ENCODE measurements at regions of chr1 and their contacts with region 1.

Region 1: GRCh38 chr1:162612606-162613400 is 19.5 kb upstream of the DDR2 start:
- DNase-seq: peak; percentile 63
- H3K4me3 Mint-ChIP-seq: no peak overlapping the region
- H3K27ac Mint-ChIP-seq: peak overlapping the region; percentile 66
- H3K4me1 Mint-ChIP-seq: peaks cover 5% of the 10 kb centered on the region
- H3K27me3 Mint-ChIP-seq: no peaks in the 10 kb centered on the region
- CTCF ChIP-seq: no peak

Region 2: GRCh38 chr1:162003826-162004208 is 609.0 kb before region 1 on chr1:
- CTCF ChIA-PET with region 1: no interaction called
- POLR2A ChIA-PET with region 1: no interaction called
- intact Hi-C with region 1: no loop called
- DNase-seq: peak; percentile 91
- H3K4me3 Mint-ChIP-seq: peak overlapping the region; percentile 13
- H3K27ac Mint-ChIP-seq: peak overlapping the region; percentile 46
- H3K4me1 Mint-ChIP-seq: peaks cover 17% of the 10 kb centered on the region
- H3K27me3 Mint-ChIP-seq: no peaks in the 10 kb centered on the region
- CTCF ChIP-seq: no peak

Region 3: DNA sequence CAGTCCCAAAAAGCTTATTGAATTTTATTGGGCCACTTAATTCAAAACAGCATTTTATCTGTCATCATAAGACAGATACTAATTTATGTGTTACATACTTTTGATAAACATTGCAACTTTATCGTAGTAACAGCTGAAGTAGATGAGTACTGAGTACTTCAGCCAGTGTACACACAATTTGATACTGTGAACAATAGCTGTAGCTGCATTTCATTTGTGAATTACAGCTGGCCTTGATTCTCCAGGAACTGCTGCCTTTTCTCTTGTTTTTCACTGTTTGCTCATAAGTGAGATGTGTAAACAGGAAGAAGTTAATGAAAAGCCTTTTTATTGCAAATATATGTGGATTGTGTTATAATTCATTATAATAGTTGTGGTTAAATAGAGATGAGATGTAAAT is 41.1 kb before region 1 on chr1:
- CTCF ChIA-PET with region 1: interaction called, 11 read pairs
- POLR2A ChIA-PET with region 1: no interaction called
- intact Hi-C with region 1: no loop called
- DNase-seq: no peak
- H3K4me3 Mint-ChIP-seq: no peak overlapping the region
- H3K27ac Mint-ChIP-seq: peak overlapping the region; percentile 14
- H3K4me1 Mint-ChIP-seq: peaks cover 62% of the 10 kb centered on the region
- H3K27me3 Mint-ChIP-seq: no peaks in the 10 kb centered on the region
- CTCF ChIP-seq: no peak

Region 4: GRCh38 chr1:162633081-162633762 is 20.4 kb after region 1 on chr1:
- CTCF ChIA-PET with region 1: interaction called, 82 read pairs
- POLR2A ChIA-PET with region 1: interaction called, 3 read pairs
- intact Hi-C with region 1: no loop called
- DNase-seq: no peak
- H3K4me3 Mint-ChIP-seq: no peak overlapping the region
- H3K27ac Mint-ChIP-seq: no peak overlapping the region
- H3K4me1 Mint-ChIP-seq: peaks cover 15% of the 10 kb centered on the region
- H3K27me3 Mint-ChIP-seq: no peaks in the 10 kb centered on the region
- CTCF ChIP-seq: no peak

Region 5: DNA sequence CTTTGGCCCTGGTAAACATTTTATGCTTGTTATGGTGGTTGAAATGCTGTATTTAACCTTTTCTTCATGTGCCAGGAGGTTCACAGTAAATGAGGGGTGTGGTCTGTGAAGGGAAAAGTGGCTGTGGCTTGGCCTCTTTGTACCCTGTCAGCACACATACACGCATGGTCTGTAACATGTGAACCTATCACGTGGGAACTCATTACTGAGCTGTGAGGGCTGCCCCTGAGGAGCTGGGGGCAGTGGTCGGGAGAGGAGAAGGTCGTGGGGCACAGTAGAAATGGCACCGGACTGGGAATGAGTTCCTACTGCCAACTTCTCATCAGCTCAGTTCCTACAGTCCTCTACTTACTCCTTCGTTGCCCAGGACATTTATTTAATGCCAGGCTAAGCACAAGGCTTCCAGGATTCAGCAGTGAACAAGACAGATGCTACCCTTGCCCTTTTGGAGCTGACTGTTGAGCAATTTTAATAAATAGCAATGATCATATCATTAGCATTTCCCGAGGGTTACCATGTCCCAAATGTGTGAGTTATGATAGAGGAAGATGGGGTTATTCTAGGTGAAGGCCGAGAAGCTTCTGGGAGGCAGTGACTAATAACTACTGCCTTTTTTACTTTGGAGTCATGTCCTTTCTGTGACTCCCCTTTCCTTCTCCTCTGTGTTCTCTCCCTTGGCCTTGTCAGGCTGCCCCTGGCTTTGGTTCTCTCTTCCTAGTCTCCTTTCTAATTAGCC is 58.3 kb after region 1 on chr1:
- CTCF ChIA-PET with region 1: interaction called, 22 read pairs
- POLR2A ChIA-PET with region 1: interaction called, 5 read pairs
- intact Hi-C with region 1: no loop called
- DNase-seq: peak; percentile 21
- H3K4me3 Mint-ChIP-seq: no peak overlapping the region
- H3K27ac Mint-ChIP-seq: no peak overlapping the region
- H3K4me1 Mint-ChIP-seq: peaks cover 24% of the 10 kb centered on the region
- H3K27me3 Mint-ChIP-seq: no peaks in the 10 kb centered on the region
- CTCF ChIP-seq: no peak

Region 6: DNA sequence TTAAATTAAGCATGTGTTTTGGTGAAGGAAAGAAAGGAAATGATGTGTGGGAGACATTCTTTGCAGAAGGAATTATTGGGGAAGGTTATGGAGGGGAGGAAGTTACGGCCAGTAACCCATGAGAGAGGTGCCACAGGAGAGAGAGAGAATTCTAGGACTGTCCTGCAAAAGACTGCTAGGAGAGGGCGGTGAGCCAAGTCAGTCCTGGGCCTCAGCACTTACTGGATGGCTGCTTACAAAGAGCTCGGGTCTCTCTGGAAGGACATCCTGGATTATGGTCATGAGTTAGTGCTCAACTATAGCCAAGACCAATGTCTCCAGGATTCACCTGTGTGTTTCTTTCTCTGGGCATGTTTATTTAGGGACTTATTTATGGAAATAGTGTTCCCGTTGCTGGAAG is 103.3 kb after region 1 on chr1:
- CTCF ChIA-PET with region 1: interaction called, 10 read pairs
- POLR2A ChIA-PET with region 1: no interaction called
- intact Hi-C with region 1: no loop called
- DNase-seq: no peak
- H3K4me3 Mint-ChIP-seq: no peak overlapping the region
- H3K27ac Mint-ChIP-seq: no peak overlapping the region
- H3K4me1 Mint-ChIP-seq: no peaks in the 10 kb centered on the region
- H3K27me3 Mint-ChIP-seq: no peaks in the 10 kb centered on the region
- CTCF ChIP-seq: no peak

Region 7: GRCh38 chr1:162835157-162835899 is 222.5 kb after region 1 on chr1:
- CTCF ChIA-PET with region 1: interaction called, 10 read pairs
- POLR2A ChIA-PET with region 1: no interaction called
- intact Hi-C with region 1: no loop called
- DNase-seq: no peak
- H3K4me3 Mint-ChIP-seq: no peak overlapping the region
- H3K27ac Mint-ChIP-seq: no peak overlapping the region
- H3K4me1 Mint-ChIP-seq: no peaks in the 10 kb centered on the region
- H3K27me3 Mint-ChIP-seq: peaks cover 15% of the 10 kb centered on the region
- CTCF ChIP-seq: no peak

Region 8: DNA sequence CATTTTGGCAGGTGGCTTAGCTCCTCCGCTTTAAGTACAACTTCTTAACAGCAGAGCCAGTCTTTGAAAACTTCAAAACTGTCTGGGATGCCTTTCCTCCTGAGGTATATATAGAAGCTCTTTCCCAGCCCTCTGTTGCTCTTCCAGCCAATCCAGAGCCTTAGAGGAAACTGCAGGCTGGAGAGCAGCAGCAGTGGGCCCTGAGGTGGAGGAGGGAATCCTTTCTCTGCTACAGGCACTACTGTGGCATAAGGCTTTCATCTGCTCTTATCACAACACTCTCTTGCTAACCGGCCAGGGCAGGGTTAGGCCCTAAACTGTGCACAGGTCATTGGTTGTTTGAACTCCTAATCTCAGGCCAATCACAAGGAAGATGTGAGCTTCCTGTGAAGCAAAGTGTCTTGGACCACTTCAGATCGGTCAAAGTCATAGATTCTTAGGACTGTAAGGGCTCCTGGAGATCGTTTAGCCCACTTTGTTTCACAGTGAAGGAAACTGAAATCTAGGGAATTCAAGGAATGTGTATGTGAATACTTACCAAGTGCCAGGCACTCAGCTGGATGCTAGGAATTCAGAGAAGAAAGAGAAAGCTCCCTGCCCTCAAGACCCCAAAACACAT is 590.1 kb after region 1 on chr1 and contains the start of gene RGS5:
- CTCF ChIA-PET with region 1: no interaction called
- POLR2A ChIA-PET with region 1: no interaction called
- intact Hi-C with region 1: no loop called
- DNase-seq: no peak
- H3K4me3 Mint-ChIP-seq: no peak within 1 kb of the TSS
- H3K27ac Mint-ChIP-seq: no peak within 1 kb of the TSS
- H3K4me1 Mint-ChIP-seq: peaks cover 9% of the 10 kb centered on the region
- H3K27me3 Mint-ChIP-seq: no peaks in the 10 kb centered on the region
- CTCF ChIP-seq: no peak
- total RNA-seq, gene RGS5: 12.9 and 14.1 TPM in 2 replicates

Region 9: DNA sequence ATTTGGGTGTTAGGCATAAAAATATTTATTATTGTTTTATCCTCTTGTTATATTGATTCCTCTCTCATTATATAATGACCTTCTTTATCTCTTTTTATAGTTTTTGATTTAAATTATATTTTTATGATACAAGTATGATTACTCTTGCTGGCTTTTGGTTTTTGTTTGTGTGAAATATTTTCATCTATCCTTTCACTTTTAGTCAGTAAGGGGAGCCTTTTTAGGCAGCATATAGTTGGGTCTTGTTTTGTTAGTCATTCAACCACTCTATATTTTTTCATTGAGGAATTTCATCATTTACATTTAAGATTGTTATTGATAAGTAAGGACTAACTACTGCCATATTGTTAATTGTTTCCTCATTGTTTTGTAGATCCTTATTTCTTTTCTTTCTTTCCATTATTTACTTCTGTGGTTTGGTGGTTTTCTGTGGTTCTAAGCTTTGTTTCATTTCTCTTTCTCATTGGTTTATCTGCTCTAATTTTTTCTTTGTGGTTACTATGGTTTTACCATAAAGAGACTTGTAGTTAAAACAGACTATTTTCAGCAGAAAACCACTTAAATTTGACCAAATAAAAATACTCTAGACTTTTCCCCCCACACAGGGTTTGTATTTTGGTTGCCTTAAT is 1302.1 kb after region 1 on chr1:
- CTCF ChIA-PET with region 1: no interaction called
- POLR2A ChIA-PET with region 1: no interaction called
- intact Hi-C with region 1: no loop called
- DNase-seq: no peak
- H3K4me3 Mint-ChIP-seq: no peak overlapping the region
- H3K27ac Mint-ChIP-seq: no peak overlapping the region
- H3K4me1 Mint-ChIP-seq: no peaks in the 10 kb centered on the region
- H3K27me3 Mint-ChIP-seq: no peaks in the 10 kb centered on the region
- CTCF ChIP-seq: no peak

Measured in MCF 10A (cell line).